ENCODE measurements at regions of chr14 and their contacts with region 1.

Region 1: DNA sequence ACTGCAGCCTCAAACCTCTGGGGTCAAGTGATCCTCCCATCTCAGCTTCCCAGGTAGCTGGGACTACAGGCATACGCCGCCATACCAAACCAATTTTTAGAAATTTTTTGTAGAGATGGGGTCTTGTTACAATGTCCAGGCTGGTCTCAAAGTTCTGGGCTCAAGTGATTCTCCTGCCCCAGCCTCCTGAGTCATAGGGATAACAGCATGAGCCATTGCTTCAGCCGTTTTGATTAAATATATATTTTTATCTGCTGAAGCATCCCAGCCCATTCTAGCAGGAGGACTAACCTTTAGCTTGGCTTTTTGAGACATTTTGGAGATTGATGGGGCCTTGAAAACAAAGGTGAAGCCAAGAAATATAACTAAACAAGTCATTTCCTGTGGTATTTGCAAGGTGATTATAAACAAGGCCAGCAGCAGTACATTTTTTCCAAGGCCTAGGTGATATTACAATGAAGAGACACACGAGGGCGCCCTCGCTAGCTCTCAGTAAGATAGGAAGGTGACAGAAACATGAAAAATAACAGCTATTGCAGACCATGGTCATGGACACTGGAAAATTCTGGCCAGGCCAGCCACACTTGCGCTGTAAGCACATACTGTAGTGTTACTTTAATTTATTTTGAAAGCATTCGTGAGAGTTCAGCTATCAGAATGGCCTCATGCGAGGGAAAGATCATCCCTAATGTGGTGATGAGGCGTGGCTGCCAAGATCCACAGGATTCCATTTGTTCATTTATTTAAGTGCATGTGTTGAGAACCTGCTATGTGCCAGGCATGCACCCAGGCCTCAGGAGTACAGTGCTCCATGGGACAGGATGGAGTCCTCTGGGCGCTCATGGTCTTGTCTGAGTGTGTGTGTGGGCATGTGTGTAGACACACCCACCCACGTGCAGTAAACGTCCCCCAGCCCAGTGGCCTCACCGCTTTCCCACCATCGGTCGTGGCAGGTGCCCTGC is 63.5 kb downstream of the DGLUCY start:
- DNase-seq: peak; percentile 35
- ATAC-seq: peak; percentile 87
- H3K4me3 ChIP-seq: no peak overlapping the region
- H3K27ac ChIP-seq: no peak overlapping the region; the same call in 1 of the 2 replicates
- H3K4me1 ChIP-seq: no peaks in the 10 kb centered on the region
- H3K27me3 ChIP-seq: no peaks in the 10 kb centered on the region
- CTCF ChIP-seq: peak; percentile 77 to 88 (median 84)
- EP300 ChIP-seq: no peak
- POLR2A ChIP-seq: no peak
- RAD21 ChIP-seq: peak; percentile 90

Region 2: DNA sequence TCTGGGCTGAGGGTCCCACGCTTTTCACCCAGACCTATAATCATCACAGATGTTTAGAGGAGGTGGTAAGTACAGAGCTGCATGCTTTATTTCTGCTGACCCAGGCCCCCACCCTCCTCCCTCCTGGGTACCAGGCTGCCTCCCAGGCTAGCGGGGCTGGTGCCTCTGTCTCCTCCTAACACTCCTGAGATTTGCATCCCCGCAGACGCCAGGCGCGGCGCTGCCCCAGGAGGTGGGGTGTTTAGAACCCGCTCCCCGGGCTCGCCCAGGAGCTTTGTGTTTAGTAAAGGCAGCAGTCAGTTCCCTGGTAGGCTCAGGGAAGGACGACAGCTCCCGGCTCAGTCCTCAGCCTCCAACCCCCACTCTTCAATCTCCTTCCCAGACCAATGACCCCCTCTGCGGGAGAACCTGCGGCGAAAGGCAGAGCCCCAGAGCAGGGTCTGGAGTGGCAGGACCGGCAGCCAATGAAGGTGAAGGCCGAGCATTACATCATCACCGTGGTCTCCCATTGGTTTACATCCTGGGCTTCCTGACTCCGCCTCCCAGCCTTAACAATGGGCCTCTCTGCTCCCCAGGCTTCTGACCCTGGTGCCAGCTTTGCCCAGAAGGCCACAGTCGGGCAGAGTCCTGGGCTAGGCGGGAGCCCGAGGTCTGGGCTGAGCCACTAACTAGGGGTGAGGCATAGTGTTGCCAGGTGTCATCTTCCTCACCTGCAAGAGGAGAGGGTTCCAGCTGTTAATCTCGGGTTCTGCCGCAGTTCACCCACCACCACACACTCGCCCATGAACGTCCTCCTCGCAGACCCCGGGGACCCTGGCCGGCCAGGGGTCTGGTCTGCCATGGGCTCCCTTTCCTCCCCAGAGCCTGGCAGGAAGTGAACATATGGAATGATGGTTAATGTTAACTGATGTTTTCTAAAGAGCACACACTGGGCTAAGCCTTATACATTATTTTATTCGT is 723.0 kb before region 1 on chr14:
- CTCF ChIA-PET with region 1: no interaction called
- POLR2A ChIA-PET with region 1: no interaction called
- RAD21 ChIA-PET with region 1: no interaction called
- SMC1A ChIA-PET with region 1: no interaction called
- in situ Hi-C with region 1: no loop called
- intact Hi-C with region 1: no loop called
- DNase-seq: no peak
- ATAC-seq: peak; percentile 69
- H3K4me3 ChIP-seq: no peak overlapping the region
- H3K27ac ChIP-seq: no peak overlapping the region
- H3K4me1 ChIP-seq: peaks cover 13% of the 10 kb centered on the region
- H3K27me3 ChIP-seq: no peaks in the 10 kb centered on the region
- CTCF ChIP-seq: no peak
- EP300 ChIP-seq: no peak
- POLR2A ChIP-seq: no peak
- RAD21 ChIP-seq: no peak

Region 3: DNA sequence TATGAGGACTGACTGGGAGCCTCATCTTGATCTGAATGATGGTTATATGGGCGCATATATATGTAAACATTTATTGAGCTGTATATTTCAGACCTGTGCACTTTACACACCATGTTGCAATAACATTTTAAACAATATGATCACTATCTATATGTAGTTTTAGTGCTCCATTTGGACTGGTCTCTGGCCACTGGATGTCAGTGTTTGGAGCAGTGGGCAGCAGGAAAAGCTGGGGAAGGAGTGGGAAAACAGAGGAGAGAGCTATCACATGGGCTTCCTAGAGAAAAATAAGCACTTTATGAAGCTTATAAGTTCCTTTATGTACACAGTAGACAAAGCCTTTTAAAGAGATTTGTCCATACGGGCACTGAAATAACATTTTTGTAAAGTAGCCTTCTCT is 311.9 kb before region 1 on chr14:
- CTCF ChIA-PET with region 1: interaction called, 3 read pairs
- POLR2A ChIA-PET with region 1: no interaction called
- RAD21 ChIA-PET with region 1: interaction called, 10 read pairs
- SMC1A ChIA-PET with region 1: interaction called, 4 read pairs
- in situ Hi-C with region 1: no loop called
- intact Hi-C with region 1: no loop called
- DNase-seq: no peak
- ATAC-seq: no peak
- H3K4me3 ChIP-seq: no peak overlapping the region
- H3K27ac ChIP-seq: no peak overlapping the region
- H3K4me1 ChIP-seq: no peaks in the 10 kb centered on the region
- H3K27me3 ChIP-seq: no peaks in the 10 kb centered on the region
- CTCF ChIP-seq: no peak
- EP300 ChIP-seq: no peak
- POLR2A ChIP-seq: no peak
- RAD21 ChIP-seq: no peak

Region 4: GRCh38 chr14:90985601-90986242 is 191.6 kb before region 1 on chr14:
- CTCF ChIA-PET with region 1: interaction called, 24 read pairs
- POLR2A ChIA-PET with region 1: no interaction called
- RAD21 ChIA-PET with region 1: interaction called, 6 read pairs
- SMC1A ChIA-PET with region 1: interaction called, 13 read pairs
- in situ Hi-C with region 1: no loop called
- intact Hi-C with region 1: loop called (anchors 5 kb)
- DNase-seq: no peak
- ATAC-seq: peak; percentile 86
- H3K4me3 ChIP-seq: no peak overlapping the region
- H3K27ac ChIP-seq: no peak overlapping the region
- H3K4me1 ChIP-seq: peaks cover 14% of the 10 kb centered on the region
- H3K27me3 ChIP-seq: no peaks in the 10 kb centered on the region
- CTCF ChIP-seq: no peak; a peak in 1 of 6 replicates
- EP300 ChIP-seq: no peak
- POLR2A ChIP-seq: no peak
- RAD21 ChIP-seq: peak; percentile 52

Region 5: GRCh38 chr14:91138511-91139359 is 38.6 kb before region 1 on chr14:
- CTCF ChIA-PET with region 1: interaction called, 44 read pairs
- POLR2A ChIA-PET with region 1: interaction called, 4 read pairs
- RAD21 ChIA-PET with region 1: interaction called, 11 read pairs
- SMC1A ChIA-PET with region 1: interaction called, 11 read pairs
- in situ Hi-C with region 1: no loop called
- intact Hi-C with region 1: no loop called
- DNase-seq: no peak
- ATAC-seq: peak; percentile 70
- H3K4me3 ChIP-seq: no peak overlapping the region
- H3K27ac ChIP-seq: no peak overlapping the region
- H3K4me1 ChIP-seq: peaks cover 14% of the 10 kb centered on the region
- H3K27me3 ChIP-seq: no peaks in the 10 kb centered on the region
- CTCF ChIP-seq: peak; percentile 47 to 61 (median 49)
- EP300 ChIP-seq: no peak
- POLR2A ChIP-seq: no peak
- RAD21 ChIP-seq: peak; percentile 53

Region 6: GRCh38 chr14:91244501-91244901 is 67.1 kb after region 1 on chr14 and contains the start of gene GPR68:
- CTCF ChIA-PET with region 1: interaction called, 15 read pairs
- POLR2A ChIA-PET with region 1: no interaction called
- RAD21 ChIA-PET with region 1: interaction called, 19 read pairs
- SMC1A ChIA-PET with region 1: interaction called, 7 read pairs
- in situ Hi-C with region 1: no loop called
- intact Hi-C with region 1: no loop called
- DNase-seq: no peak
- ATAC-seq: 0 out of 3 replicates have a peak, but pooled peaks have one; percentile 2
- H3K4me3 ChIP-seq: peak within 1 kb of the TSS; percentile 16
- H3K27ac ChIP-seq: peak within 1 kb of the TSS; percentile 86
- H3K4me1 ChIP-seq: peaks cover 32% of the 10 kb centered on the region
- H3K27me3 ChIP-seq: no peaks in the 10 kb centered on the region
- CTCF ChIP-seq: no peak
- EP300 ChIP-seq: no peak
- POLR2A ChIP-seq: no peak
- RAD21 ChIP-seq: no peak
- polyA plus RNA-seq, gene GPR68: 0.06 to 0.35 TPM

Region 7: GRCh38 chr14:91281346-91281745 is 104.0 kb after region 1 on chr14:
- CTCF ChIA-PET with region 1: interaction called, 211 read pairs
- POLR2A ChIA-PET with region 1: interaction called, 4 read pairs
- RAD21 ChIA-PET with region 1: interaction called, 44 read pairs
- SMC1A ChIA-PET with region 1: interaction called, 109 read pairs
- in situ Hi-C with region 1: loop called (anchors 5 kb)
- intact Hi-C with region 1: loop called (anchors 1 kb)
- DNase-seq: no peak
- ATAC-seq: no peak
- H3K4me3 ChIP-seq: no peak overlapping the region
- H3K27ac ChIP-seq: no peak overlapping the region
- H3K4me1 ChIP-seq: no peaks in the 10 kb centered on the region
- H3K27me3 ChIP-seq: no peaks in the 10 kb centered on the region
- CTCF ChIP-seq: no peak
- EP300 ChIP-seq: no peak
- POLR2A ChIP-seq: 0 out of 2 replicates have a peak, but pooled peaks have one; percentile 6
- RAD21 ChIP-seq: no peak

Region 8: GRCh38 chr14:91424813-91425530 is 247.6 kb after region 1 on chr14:
- CTCF ChIA-PET with region 1: interaction called, 10 read pairs
- POLR2A ChIA-PET with region 1: no interaction called
- RAD21 ChIA-PET with region 1: interaction called, 15 read pairs
- SMC1A ChIA-PET with region 1: interaction called, 8 read pairs
- in situ Hi-C with region 1: loop called (anchors 5 kb)
- intact Hi-C with region 1: no loop called
- DNase-seq: no peak
- ATAC-seq: no peak
- H3K4me3 ChIP-seq: no peak overlapping the region
- H3K27ac ChIP-seq: no peak overlapping the region
- H3K4me1 ChIP-seq: no peaks in the 10 kb centered on the region
- H3K27me3 ChIP-seq: no peaks in the 10 kb centered on the region
- CTCF ChIP-seq: no peak
- EP300 ChIP-seq: no peak
- POLR2A ChIP-seq: no peak
- RAD21 ChIP-seq: no peak

Region 9: GRCh38 chr14:92287987-92288386 is 1110.6 kb after region 1 on chr14:
- CTCF ChIA-PET with region 1: no interaction called
- POLR2A ChIA-PET with region 1: no interaction called
- RAD21 ChIA-PET with region 1: no interaction called
- SMC1A ChIA-PET with region 1: no interaction called
- in situ Hi-C with region 1: no loop called
- intact Hi-C with region 1: no loop called
- DNase-seq: no peak
- ATAC-seq: no peak
- H3K4me3 ChIP-seq: no peak overlapping the region
- H3K27ac ChIP-seq: no peak overlapping the region
- H3K4me1 ChIP-seq: no peaks in the 10 kb centered on the region
- H3K27me3 ChIP-seq: peaks cover 2 to 3% of the 10 kb centered on the region in 2 experiments; a peak in 3 of 4 replicates
- CTCF ChIP-seq: no peak
- EP300 ChIP-seq: no peak
- POLR2A ChIP-seq: no peak
- RAD21 ChIP-seq: no peak